Mammary epithelial cell (primary cell): ENCODE measurements at regions of chr14 and their contacts with region 1.

Region 1: DNA sequence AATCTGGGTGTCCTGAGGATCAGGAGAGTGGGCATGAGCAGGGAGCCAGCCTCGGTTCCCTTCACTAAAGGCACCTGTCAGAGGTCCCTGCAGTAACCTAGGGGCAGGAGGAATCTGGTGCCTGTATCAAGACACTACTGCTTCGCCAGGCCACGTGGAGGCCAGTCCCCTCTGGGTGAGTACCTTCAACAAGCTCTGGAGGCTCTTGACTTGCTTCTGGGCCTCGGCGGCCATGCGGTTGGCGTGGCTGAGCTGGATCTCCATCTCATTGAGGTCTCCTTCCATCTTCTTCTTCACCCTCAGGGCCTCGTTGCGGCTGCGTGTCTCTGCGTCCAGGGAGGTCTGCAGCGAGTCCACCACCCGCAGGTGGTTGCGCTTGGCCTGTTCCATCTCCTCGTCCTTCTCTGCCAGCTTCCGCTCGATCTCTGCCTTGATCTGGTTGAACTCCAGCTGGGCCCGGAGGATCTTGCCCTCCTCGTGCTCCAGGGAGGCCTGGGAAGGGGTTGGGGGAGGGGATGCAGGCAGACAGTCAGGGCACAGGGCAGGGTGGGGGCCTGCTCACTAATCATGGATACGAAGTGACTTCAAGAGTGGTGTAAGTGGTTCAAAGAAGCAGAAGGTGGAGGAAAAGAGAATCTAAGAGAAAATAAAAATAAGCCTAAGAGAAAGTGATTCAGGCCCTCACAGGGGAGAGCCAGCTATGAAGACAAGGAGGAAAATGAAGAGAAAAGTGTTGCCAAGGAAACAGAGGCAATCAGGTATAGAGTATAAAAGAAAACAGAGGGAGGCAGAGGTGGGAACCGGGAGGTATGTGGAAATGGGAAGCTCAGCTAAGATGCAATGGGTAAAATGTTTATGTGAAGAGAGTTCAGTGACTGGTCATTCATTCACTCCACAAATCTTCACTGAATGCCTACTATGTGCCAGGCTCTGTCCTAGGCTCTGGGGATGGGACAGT is 8.0 kb upstream of the MYH6 start:
- DNase-seq: no peak
- H3K4me3 ChIP-seq: no peak overlapping the region
- H3K27ac ChIP-seq: no peak overlapping the region
- H3K4me1 ChIP-seq: no peaks in the 10 kb centered on the region
- H3K27me3 ChIP-seq: no peaks in the 10 kb centered on the region
- CTCF ChIP-seq: no peak

Region 2: DNA sequence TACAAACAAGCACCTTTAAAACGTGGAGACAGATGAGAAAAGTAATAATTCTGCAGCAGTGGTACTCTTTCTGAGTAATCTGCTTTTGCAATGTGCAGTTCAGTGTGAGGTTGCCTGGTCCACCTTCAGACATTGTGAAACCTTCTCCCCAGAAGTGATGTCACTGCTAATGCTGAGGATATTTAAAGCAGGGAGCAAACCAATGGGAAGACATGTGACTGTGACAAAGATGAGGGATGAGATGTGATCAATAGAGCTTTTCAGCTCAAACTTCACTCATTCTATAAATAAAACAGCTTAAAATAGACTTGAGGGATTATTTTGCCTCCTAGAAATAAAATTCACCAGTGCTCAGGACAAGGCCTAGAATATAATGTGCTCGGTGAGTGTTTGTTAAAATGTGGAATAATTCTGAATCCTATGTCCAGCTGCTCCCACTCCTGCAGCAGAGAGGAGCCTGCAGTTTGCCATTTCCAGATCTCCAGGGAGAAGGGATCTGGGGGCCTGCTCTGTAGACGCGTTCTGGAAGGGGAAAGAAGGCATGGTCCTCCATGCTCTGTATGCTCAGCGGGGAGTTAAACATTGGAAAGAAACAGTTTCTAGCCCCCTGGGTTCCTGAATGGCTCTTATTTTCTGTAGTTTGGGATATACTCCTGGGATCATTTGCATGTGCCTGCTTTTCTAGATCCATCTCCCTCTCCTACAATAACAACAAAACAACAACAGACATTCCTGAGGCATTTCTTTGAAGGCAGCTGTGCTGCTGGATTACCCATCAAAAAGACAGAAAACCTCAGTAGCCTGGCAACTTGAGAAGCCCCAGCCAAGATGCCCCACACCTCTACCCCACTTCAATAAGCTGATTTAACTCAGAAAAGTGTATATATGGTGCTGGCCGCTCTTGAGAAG is 241.6 kb before region 1 on chr14:
- CTCF ChIA-PET with region 1: no interaction called
- dilution Hi-C with region 1: no loop called
- in situ Hi-C with region 1: no loop called
- intact Hi-C with region 1: no loop called
- DNase-seq: peak; percentile 73
- H3K4me3 ChIP-seq: no peak overlapping the region
- H3K27ac ChIP-seq: no peak overlapping the region
- H3K4me1 ChIP-seq: peaks cover 54% of the 10 kb centered on the region
- H3K27me3 ChIP-seq: no peaks in the 10 kb centered on the region
- CTCF ChIP-seq: no peak

Region 3: GRCh38 chr14:23351681-23352510 is 64.2 kb before region 1 on chr14:
- CTCF ChIA-PET with region 1: no interaction called
- dilution Hi-C with region 1: no loop called
- in situ Hi-C with region 1: no loop called
- intact Hi-C with region 1: no loop called
- DNase-seq: no peak
- H3K4me3 ChIP-seq: peak overlapping the region; percentile 9 to 53 (median 44)
- H3K27ac ChIP-seq: no peak overlapping the region
- H3K4me1 ChIP-seq: peaks cover 11% of the 10 kb centered on the region
- H3K27me3 ChIP-seq: peaks cover 13% of the 10 kb centered on the region
- CTCF ChIP-seq: no peak

Region 4: DNA sequence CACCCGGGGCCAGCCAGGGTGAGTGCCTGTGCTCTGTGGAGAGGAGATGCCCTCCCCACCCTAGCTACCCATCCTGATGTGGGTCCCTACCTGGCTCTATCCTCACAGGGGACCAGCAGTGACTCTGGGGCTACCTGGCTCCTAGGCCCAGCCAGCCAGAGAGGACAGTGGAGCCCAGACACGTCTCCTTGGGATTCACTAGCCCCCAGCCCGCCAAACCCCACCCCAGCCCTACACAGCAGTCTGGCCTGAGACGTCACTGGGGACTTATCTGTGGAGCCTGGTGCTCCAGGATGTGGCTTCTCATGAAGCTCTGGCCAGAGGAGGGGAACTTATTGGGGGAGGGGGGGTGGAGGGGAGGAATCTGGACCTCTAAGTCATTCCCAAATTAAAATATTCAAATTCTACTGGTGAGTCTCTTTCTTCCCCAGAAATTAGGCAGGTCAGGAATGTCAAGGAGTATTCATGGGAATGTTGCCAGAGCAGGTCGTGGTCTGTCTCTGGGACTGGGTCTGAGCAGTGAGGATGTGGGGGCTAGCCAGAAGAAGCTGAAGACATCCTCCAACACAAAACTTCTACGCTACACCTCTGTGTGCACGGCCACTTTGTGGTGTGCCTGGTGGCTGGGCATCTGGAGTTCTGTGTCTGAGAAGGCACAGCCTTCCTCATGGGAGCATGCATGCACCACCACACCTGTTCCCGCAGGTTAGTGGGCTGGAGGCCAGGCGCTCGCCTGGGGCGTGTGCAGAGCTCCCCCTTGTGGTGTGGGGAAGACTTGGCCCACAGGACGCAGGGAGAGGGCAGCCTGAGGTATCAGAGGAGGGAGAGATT is 36.5 kb before region 1 on chr14:
- CTCF ChIA-PET with region 1: no interaction called
- dilution Hi-C with region 1: loop called (anchors 5 kb)
- in situ Hi-C with region 1: no loop called
- intact Hi-C with region 1: no loop called
- DNase-seq: peak; percentile 55
- H3K4me3 ChIP-seq: no peak overlapping the region
- H3K27ac ChIP-seq: no peak overlapping the region
- H3K4me1 ChIP-seq: no peaks in the 10 kb centered on the region
- H3K27me3 ChIP-seq: no peaks in the 10 kb centered on the region
- CTCF ChIP-seq: peak; percentile 91 to 99